ENCODE measurements at regions of chr15 and their contacts with region 1.

Region 1: GRCh38 chr15:90086868-90087268 is 15.4 kb downstream of the IDH2 start:
- H3K4me3 Mint-ChIP-seq: no peak overlapping the region
- H3K27ac Mint-ChIP-seq: no peak overlapping the region
- H3K4me1 Mint-ChIP-seq: peaks cover 46% of the 10 kb centered on the region
- H3K27me3 Mint-ChIP-seq: no peaks in the 10 kb centered on the region

Region 2: DNA sequence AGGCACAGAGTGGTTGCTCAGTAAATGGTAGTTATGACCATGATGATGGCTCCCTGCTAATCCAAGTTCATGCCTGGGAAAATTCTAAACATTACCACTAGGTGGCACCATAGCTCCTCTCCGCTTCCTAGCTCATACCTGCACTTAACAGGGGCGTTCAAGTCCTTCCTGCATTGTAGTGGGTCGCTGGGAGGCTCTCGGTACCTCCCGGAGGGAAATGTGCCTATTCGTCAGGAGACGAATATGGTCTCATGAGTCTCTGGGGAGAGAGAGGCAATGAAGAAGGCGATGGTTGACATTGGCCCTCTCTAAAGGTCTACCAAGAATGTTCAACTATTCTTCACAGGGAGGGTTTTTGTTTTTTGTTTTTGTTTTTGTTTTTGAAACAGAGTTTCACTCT is 346.7 kb before region 1 on chr15:
- intact Hi-C with region 1: loop called (anchors 5 kb)
- H3K4me3 Mint-ChIP-seq: no peak overlapping the region
- H3K27ac Mint-ChIP-seq: no peak overlapping the region
- H3K4me1 Mint-ChIP-seq: no peaks in the 10 kb centered on the region
- H3K27me3 Mint-ChIP-seq: peaks cover 13% of the 10 kb centered on the region

Region 3: GRCh38 chr15:89893696-89894455 is 193.0 kb before region 1 on chr15 and contains the start of gene AP3S2:
- intact Hi-C with region 1: loop called (anchors 5 kb)
- H3K4me3 Mint-ChIP-seq: peak within 1 kb of the TSS; percentile 95
- H3K27ac Mint-ChIP-seq: peak within 1 kb of the TSS; percentile 98
- H3K4me1 Mint-ChIP-seq: peaks cover 30% of the 10 kb centered on the region
- H3K27me3 Mint-ChIP-seq: no peaks in the 10 kb centered on the region

Region 4: DNA sequence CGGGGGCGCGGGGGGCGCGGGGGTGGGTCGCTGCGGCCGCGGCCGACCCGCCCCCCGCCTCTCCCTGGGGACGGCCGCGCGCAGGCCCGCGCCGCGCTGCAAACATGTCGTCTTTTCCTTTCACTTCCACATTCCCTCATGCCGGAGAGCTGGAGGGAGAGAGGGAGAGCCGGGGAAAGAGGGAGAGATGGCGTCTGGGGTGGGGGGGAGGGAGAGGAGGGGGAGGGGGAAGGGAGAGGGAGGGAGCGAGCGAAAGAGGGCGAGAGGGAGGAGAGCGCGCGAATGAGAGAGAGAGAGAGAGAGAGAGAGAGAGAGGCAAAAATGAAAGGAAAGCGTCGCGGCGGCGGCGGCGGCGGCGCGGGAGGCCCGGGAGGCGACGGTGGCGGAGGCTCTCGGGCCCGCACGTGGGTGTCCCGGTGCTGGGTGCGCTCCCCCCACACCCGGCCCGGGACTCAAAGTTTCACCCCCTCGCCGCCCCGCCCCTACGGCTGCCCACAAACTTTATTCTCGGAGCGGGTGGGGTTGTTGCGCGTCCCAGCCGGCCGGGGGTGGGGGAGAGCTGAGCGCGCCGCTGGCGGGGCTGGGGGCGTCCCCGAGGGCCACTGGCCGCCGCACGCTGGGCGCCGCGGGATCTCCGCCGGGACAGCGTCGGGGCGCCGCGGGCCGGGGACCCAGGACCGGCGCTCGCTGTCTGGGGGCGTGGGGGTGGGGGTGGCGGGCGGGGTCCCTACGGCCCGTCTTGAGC is 85.0 kb before region 1 on chr15:
- intact Hi-C with region 1: no loop called
- H3K4me3 Mint-ChIP-seq: peak overlapping the region; percentile 95
- H3K27ac Mint-ChIP-seq: peak overlapping the region; percentile 97
- H3K4me1 Mint-ChIP-seq: peaks cover 79% of the 10 kb centered on the region
- H3K27me3 Mint-ChIP-seq: no peaks in the 10 kb centered on the region

Region 5: DNA sequence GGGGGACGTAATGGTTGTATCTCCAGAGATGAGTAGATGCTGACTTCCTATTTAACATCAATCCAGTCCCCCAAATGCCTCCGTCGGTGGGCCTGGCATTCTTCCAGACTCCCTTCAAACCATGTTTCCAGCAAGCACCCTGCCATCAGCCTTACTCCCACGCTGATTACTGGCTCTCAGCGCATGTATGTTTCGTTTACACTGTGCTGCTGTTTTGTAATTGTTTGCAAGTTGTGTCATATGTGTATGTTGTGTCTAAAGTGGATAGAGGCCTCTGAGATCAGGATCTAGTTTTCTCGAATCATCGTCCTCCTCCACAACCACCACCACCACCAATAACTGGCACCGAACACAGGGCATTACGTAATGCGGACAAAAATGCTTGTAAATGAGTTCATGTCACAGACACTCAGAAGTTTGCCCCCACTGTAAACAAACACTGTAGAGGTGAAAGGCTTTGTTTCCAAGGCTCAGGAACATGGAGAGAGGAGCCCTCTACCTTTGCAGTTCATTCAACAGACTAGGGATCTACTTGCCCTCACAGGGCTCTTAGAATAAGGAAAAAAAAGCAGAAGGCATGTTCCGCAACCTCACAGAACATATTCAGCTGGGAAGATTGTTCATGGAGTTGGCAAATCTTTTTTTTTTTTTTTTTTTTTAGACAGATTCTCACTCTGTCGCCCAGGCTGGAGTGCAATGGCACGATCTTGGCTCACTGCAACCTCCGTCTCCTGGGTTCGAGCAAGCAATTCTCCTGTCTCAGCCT is 68.2 kb after region 1 on chr15:
- intact Hi-C with region 1: no loop called
- H3K4me3 Mint-ChIP-seq: no peak overlapping the region
- H3K27ac Mint-ChIP-seq: no peak overlapping the region
- H3K4me1 Mint-ChIP-seq: peaks cover 36% of the 10 kb centered on the region
- H3K27me3 Mint-ChIP-seq: no peaks in the 10 kb centered on the region

Region 6: DNA sequence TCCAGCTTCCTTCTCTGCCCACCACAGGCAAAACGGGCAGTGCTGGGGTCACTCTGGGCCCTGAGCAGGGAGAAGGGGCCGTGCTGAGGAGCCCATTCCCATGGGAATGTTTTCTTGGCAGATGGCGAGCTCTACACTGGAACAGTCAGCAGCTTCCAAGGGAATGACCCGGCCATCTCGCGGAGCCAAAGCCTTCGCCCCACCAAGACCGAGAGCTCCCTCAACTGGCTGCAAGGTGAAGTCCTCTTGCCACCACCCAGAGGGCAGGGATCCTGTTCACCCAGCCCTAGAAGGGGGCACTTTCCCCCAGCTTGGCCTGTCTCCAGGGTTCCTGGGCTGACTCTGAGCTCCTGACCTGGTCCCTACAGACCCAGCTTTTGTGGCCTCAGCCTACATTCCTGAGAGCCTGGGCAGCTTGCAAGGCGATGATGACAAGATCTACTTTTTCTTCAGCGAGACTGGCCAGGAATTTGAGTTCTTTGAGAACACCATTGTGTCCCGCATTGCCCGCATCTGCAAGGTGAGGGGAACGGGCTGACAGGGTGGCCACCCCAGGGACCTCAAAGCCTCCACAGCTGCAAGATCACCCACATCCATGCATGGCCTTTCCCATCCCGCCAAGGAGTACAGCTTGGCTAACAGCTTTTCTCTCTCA is 134.5 kb after region 1 on chr15:
- intact Hi-C with region 1: loop called (anchors 10 kb)
- H3K4me3 Mint-ChIP-seq: no peak overlapping the region
- H3K27ac Mint-ChIP-seq: no peak overlapping the region
- H3K4me1 Mint-ChIP-seq: peaks cover 8% of the 10 kb centered on the region
- H3K27me3 Mint-ChIP-seq: no peaks in the 10 kb centered on the region

Region 7: DNA sequence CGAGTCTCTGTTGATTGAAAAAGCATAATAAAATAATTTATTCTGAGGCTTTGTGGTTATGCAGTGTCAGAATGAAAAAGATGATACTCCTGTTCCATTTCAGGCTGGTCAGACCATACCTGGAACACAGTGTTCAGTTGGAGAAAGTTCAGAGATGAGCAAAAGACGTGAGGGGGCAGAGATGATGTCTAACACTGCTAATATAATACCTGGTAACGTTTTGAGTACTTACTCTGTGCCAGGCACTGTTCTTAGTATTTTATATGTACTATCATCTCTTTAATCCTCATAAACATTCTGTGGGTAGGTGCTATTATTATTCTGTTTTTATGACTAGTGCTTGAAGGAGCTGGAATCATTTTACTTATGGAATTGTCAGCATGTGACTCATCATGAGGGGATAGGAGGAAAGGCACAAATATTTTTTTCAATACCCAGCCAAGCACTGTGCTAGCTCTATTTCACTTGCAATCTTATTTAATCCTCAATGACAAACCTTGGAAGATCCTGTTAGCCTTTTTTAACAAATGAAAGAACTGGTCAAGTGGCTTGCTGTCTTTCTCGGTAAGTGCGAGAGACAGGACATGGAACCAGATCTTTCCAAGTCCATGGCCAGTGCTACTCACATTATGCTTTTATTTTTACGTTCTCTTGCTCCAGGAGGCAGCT is 333.0 kb after region 1 on chr15:
- intact Hi-C with region 1: no loop called
- H3K4me3 Mint-ChIP-seq: no peak overlapping the region
- H3K27ac Mint-ChIP-seq: peak overlapping the region; percentile 23
- H3K4me1 Mint-ChIP-seq: peaks cover 62% of the 10 kb centered on the region
- H3K27me3 Mint-ChIP-seq: no peaks in the 10 kb centered on the region

Measured in dendritic cell treated with granulocyte-macrophage colony-stimulating factor and Interleukin-4, amounts not matched to agents 40 ng/mL and 50 ng/mL, for 4 days (primary cell).